ENCODE measurements at regions of chr17 and their contacts with region 1.

Region 1: GRCh38 chr17:17206124-17206912 is at the start of gene PLD6:
- DNase-seq: peak; percentile 88
- H3K4me3 Mint-ChIP-seq: peak within 1 kb of the TSS; percentile 94
- H3K27ac Mint-ChIP-seq: peak within 1 kb of the TSS; percentile 90
- H3K4me1 Mint-ChIP-seq: peaks cover 27% of the 10 kb centered on the region
- H3K27me3 Mint-ChIP-seq: no peaks in the 10 kb centered on the region
- total RNA-seq, gene PLD6: 5.3 to 5.4 TPM

Region 2: DNA sequence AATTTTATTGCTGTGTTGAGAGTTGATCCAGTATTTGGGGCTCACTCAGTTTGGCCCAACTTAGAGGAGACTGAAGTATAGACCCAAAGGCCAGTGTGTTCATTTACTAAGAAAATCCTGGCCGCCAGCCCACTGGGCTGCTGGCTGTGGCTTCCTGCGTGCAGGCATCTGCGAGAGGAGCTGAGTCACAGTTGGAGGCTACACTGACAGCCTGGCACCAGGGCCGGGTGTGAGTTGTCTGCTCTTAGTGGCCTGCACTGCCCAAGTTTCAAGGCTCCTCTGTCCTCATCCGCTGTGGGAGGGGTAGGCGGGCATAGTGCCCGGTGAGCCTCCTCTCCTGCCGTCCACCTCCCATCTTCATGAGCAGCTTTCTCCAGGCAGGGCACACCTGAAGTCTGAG is 54.4 kb before region 1 on chr17:
- CTCF ChIA-PET with region 1: no interaction called
- intact Hi-C with region 1: loop called (anchors 2 kb)
- DNase-seq: peak; percentile 31
- H3K4me3 Mint-ChIP-seq: no peak overlapping the region
- H3K27ac Mint-ChIP-seq: no peak overlapping the region
- H3K4me1 Mint-ChIP-seq: peaks cover 49% of the 10 kb centered on the region
- H3K27me3 Mint-ChIP-seq: no peaks in the 10 kb centered on the region

Region 3: DNA sequence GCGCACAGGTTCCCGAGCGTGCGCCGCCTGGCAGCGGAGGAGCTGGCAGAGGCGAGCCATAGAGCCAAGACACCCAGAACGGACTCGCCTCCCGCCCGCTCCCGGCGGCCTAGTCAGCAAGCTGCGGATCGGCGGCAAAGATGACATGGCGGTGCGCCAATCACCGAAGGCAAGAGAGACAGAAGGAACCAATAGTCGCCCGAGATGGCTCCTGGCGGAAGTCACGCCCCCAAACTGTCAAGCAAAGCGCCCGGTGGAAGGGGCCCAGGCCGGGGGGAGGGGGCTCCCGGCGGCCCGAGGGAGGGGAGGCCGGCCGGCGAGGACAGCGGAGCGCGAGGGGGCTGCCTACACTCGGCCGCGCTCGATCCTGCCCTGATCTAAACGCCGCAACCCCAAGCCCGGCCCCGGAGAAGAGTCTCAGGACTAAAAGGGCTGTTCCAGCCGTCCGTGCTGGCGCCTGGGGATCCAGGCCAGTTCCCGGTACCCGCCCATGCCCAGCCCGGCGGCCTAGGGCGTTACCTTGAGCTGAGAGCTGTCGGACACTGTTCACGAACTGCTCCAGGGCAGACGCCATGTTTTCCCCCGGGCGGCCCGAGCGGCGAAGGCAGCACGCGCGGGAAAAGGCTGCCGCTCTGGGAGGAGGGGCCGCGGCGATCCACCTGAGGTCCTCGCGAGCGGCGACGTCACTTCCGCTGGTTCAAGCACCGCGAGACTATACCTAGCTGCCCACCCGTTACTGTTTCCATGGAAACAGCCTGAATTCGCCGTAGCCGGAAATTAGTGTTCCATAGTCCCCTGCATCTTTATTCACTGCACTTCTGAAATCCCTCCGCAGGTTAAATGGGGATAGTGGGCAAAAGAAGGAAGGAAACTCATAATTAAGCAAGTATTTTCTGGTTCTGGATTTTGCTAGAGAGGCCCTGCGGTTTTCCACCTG is 74.6 kb after region 1 on chr17 and contains the start of gene COPS3:
- CTCF ChIA-PET with region 1: no interaction called
- intact Hi-C with region 1: loop called (anchors 2 kb)
- DNase-seq: peak; percentile 99
- H3K4me3 Mint-ChIP-seq: peak within 1 kb of the TSS; percentile 94
- H3K27ac Mint-ChIP-seq: peak within 1 kb of the TSS; percentile 88
- H3K4me1 Mint-ChIP-seq: peaks cover 39% of the 10 kb centered on the region
- H3K27me3 Mint-ChIP-seq: no peaks in the 10 kb centered on the region
- total RNA-seq, gene COPS3: 103 to 104 TPM

Measured in activated naive CD4-positive, alpha-beta T cell treated with anti-CD3 and anti-CD28 coated beads for 36 hours (primary cell).